GM12878 (cell line): ENCODE measurements at regions of chr2 and their contacts with region 1.

Region 1: GRCh38 chr2:149451417-149452109 is 121.2 kb downstream of the LYPD6 start:
- DNase-seq: no peak
- ATAC-seq: peak; percentile 72
- H3K4me3 ChIP-seq: no peak overlapping the region
- H3K27ac ChIP-seq: no peak overlapping the region
- H3K4me1 ChIP-seq: no peaks in the 10 kb centered on the region
- H3K27me3 ChIP-seq: no peaks in the 10 kb centered on the region
- CTCF ChIP-seq: no peak
- EP300 ChIP-seq: no peak
- POLR2A ChIP-seq: no peak
- RAD21 ChIP-seq: no peak

Region 2: DNA sequence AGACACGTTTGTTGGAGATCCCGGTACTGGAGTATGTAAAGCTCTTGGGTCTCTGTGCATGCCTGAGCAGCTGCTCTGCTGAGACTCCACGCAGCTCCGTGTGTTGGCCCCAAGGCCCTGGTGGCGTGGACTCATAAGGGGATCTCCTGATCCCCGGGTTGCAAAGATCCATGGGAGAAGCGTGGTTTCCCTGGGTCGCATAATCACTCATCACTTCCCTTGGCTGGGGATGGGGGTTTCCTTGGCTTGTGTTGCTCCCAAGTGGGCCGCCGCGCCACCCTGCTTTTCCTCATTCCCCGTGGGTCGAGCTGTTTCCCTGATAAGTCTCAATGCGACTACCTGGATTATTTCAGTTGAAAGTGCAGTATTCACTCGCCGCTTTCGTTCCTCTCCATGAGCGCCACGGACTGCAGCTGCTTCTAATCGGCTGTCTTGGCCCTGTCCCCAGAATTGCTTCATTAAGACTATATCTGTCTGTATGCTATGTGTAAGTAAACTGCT is 731.0 kb before region 1 on chr2:
- CTCF ChIA-PET with region 1: no interaction called
- POLR2A ChIA-PET with region 1: interaction called, 11 read pairs
- RAD21 ChIA-PET with region 1: no interaction called
- SMC1A ChIA-PET with region 1: no interaction called
- in situ Hi-C with region 1: no loop called
- intact Hi-C with region 1: no loop called
- DNase-seq: no peak
- ATAC-seq: peak; percentile 16; the same call in 1 of the 3 replicates
- H3K4me3 ChIP-seq: no peak overlapping the region
- H3K27ac ChIP-seq: no peak overlapping the region
- H3K4me1 ChIP-seq: peaks cover 18% of the 10 kb centered on the region
- H3K27me3 ChIP-seq: no peaks in the 10 kb centered on the region
- CTCF ChIP-seq: no peak
- EP300 ChIP-seq: no peak
- POLR2A ChIP-seq: no peak
- RAD21 ChIP-seq: no peak

Region 3: DNA sequence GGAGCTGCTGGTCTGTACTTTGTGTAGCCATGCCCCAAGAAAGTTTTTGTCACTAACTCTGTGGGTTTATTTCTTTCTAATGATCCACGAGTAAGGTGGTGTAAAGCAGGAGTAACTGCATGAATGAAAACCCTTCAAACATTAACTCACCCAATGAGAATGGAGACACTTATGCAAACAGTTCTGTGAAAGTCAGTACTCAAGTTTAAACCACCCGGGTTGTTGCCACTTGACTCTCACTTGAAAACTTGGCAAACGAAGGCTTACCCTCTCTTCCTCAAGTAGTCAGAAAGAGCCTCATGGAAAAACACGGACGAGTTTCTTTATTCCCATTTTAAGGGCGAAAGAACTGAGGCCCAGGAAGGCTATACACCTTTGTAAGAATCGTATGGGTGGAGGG is 18.5 kb after region 1 on chr2:
- CTCF ChIA-PET with region 1: no interaction called
- POLR2A ChIA-PET with region 1: no interaction called
- RAD21 ChIA-PET with region 1: no interaction called
- SMC1A ChIA-PET with region 1: no interaction called
- in situ Hi-C with region 1: no loop called
- intact Hi-C with region 1: no loop called
- DNase-seq: no peak
- ATAC-seq: no peak
- H3K4me3 ChIP-seq: no peak overlapping the region
- H3K27ac ChIP-seq: no peak overlapping the region
- H3K4me1 ChIP-seq: no peaks in the 10 kb centered on the region
- H3K27me3 ChIP-seq: no peaks in the 10 kb centered on the region
- CTCF ChIP-seq: no peak
- EP300 ChIP-seq: no peak
- POLR2A ChIP-seq: no peak
- RAD21 ChIP-seq: no peak